ENCODE measurements at regions of chr22 and their contacts with region 1.

Region 1: GRCh38 chr22:30423982-30424963 is 1.3 kb upstream of the MTFP1 start:
- DNase-seq: peak; percentile 100
- H3K4me3 ChIP-seq: peak overlapping the region; percentile 93
- H3K27ac ChIP-seq: peak overlapping the region; percentile 75
- H3K4me1 ChIP-seq: peaks cover 35% of the 10 kb centered on the region
- CTCF ChIP-seq: 0 out of 2 replicates have a peak, but pooled peaks have one; percentile 38

Region 2: DNA sequence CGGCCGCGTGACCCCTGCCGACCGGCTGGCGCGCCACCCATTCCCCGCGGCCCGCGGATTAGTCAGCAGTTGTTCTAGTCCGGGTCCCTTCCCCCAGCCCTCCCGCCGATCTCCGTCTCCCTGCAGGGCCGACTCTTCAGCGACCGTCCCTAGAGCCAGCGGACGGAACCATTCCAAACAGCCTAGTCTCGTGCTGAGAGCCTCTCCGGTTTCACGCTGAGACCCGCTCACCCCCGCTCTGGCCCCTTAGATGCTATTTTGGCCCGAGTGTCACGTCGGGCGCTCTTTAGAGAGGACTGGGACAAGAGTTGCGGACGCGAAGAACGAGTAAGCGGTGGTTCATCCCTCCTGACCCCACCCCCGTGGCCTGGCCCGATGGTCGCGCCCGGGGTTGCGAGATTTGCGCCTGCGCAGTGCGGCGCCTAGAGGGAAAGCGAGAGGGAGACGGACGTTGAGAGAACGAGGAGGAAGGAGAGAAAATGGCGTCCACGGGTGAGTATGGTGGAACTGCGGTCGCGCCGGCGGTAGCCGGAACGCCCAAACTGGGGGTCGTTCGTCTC is 1156.3 kb before region 1 on chr22 and contains the starts of genes EWSR1 and RHBDD3:
- CTCF ChIA-PET with region 1: no interaction called
- POLR2A ChIA-PET with region 1: no interaction called
- intact Hi-C with region 1: loop called (anchors 10 kb)
- DNase-seq: peak; percentile 97
- H3K4me3 ChIP-seq: peak within 1 kb of the TSS; percentile 92
- H3K27ac ChIP-seq: peak within 1 kb of the TSS; percentile 75
- H3K4me1 ChIP-seq: peaks cover 34% of the 10 kb centered on the region
- CTCF ChIP-seq: no peak
- total RNA-seq, gene EWSR1: 270 and 311 TPM in 2 replicates
- total RNA-seq, gene RHBDD3: 37.9 and 44.5 TPM in 2 replicates

Region 3: DNA sequence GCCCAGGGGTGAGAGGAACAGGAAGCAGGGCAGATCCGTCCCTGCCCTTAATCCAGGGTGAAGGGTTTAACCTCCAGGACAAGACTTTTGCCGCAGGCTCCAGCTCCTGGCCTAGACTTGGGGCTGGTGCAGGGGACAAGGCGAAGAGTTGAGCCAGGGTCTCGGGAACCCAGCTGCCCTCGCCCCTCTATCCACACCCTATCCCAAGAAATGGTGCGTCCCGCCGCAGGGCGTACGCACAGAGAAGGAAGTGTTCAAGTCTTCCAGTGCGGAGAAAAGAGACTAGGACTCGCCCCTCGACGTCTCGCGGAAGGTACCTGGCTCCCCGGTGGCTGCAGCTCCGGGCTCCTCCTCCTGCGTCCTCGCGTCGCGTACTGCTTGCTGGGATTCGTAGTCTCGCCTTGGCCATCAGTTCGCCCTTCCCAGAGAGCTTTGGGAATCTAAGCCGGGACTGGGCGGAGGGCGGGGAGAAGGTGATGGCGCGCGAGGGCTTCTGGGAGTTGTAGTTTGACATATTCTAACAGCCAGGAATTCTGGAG is 657.6 kb before region 1 on chr22 and contains the start of gene ZMAT5:
- CTCF ChIA-PET with region 1: no interaction called
- POLR2A ChIA-PET with region 1: no interaction called
- intact Hi-C with region 1: loop called (anchors 5 kb)
- DNase-seq: peak; percentile 98
- H3K4me3 ChIP-seq: peak within 1 kb of the TSS; percentile 89
- H3K27ac ChIP-seq: peak within 1 kb of the TSS; percentile 52
- H3K4me1 ChIP-seq: peaks cover 22% of the 10 kb centered on the region
- CTCF ChIP-seq: no peak
- total RNA-seq, gene ZMAT5: 19.1 and 22.1 TPM in 2 replicates

Region 4: GRCh38 chr22:30386960-30387827 is 37.1 kb before region 1 on chr22 and contains the start of gene RNF215:
- CTCF ChIA-PET with region 1: interaction called, 5 read pairs
- POLR2A ChIA-PET with region 1: interaction called, 15 read pairs
- intact Hi-C with region 1: loop called (anchors 1 kb)
- DNase-seq: peak; percentile 86
- H3K4me3 ChIP-seq: peak within 1 kb of the TSS; percentile 66
- H3K27ac ChIP-seq: no peak within 1 kb of the TSS
- H3K4me1 ChIP-seq: peaks cover 23% of the 10 kb centered on the region
- CTCF ChIP-seq: peak; percentile 82
- total RNA-seq, gene RNF215: 6.9 and 8.0 TPM in 2 replicates

Region 5: DNA sequence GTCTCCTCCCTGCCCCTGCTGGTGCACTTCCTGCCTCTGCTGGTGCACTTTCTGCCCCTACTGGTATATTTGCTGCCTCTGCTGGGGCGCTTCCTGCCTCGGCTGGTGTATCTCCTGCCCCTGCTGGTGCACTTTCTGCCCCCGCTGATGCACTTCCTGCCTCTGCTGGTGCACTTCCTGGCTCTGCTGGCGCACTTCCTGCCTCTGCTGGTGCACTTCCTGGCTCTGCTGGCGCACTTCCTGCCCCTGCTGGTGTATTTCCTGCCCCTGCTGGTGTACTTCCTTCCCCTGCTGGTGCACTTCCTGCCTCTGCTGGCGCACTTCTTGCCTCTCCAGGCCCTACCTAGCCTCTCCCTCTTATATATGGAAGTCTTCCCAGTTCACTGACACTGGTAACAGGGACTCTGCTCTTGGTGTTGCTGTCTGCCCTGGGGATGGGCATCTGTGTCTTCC is 11.4 kb after region 1 on chr22:
- CTCF ChIA-PET with region 1: interaction called, 6 read pairs
- POLR2A ChIA-PET with region 1: interaction called, 48 read pairs
- intact Hi-C with region 1: loop called (anchors 1 kb)
- DNase-seq: peak; percentile 90
- H3K4me3 ChIP-seq: peak overlapping the region; percentile 63
- H3K27ac ChIP-seq: peak overlapping the region; percentile 67
- H3K4me1 ChIP-seq: peaks cover 25% of the 10 kb centered on the region
- CTCF ChIP-seq: peak; percentile 67

Region 6: DNA sequence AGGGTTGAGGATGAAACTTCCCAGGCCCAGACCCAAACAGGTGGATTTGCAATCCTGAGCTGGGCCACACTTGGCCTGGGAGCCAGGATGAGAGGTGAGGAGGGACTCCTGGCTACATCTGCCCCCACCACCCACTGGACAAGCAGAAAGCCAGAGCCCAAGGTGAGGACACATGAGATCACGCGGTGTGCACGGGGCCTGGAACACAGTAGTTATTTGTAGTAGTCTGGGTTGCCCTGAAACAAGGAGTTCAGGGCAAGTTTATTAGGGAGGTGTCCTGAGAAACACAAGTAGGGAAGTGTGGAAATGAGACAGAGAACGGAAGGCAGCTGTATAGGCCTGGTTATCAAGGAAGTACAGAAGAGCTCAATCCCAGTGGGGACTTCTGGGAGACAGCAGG is 122.9 kb after region 1 on chr22:
- CTCF ChIA-PET with region 1: no interaction called
- POLR2A ChIA-PET with region 1: no interaction called
- intact Hi-C with region 1: no loop called
- DNase-seq: no peak
- H3K4me3 ChIP-seq: no peak overlapping the region
- H3K27ac ChIP-seq: no peak overlapping the region
- H3K4me1 ChIP-seq: no peaks in the 10 kb centered on the region
- CTCF ChIP-seq: no peak

Region 7: GRCh38 chr22:30562366-30562765 is 138.1 kb after region 1 on chr22:
- CTCF ChIA-PET with region 1: no interaction called
- POLR2A ChIA-PET with region 1: no interaction called
- intact Hi-C with region 1: no loop called
- DNase-seq: no peak
- H3K4me3 ChIP-seq: no peak overlapping the region
- H3K27ac ChIP-seq: no peak overlapping the region
- H3K4me1 ChIP-seq: no peaks in the 10 kb centered on the region
- CTCF ChIP-seq: no peak

Region 8: DNA sequence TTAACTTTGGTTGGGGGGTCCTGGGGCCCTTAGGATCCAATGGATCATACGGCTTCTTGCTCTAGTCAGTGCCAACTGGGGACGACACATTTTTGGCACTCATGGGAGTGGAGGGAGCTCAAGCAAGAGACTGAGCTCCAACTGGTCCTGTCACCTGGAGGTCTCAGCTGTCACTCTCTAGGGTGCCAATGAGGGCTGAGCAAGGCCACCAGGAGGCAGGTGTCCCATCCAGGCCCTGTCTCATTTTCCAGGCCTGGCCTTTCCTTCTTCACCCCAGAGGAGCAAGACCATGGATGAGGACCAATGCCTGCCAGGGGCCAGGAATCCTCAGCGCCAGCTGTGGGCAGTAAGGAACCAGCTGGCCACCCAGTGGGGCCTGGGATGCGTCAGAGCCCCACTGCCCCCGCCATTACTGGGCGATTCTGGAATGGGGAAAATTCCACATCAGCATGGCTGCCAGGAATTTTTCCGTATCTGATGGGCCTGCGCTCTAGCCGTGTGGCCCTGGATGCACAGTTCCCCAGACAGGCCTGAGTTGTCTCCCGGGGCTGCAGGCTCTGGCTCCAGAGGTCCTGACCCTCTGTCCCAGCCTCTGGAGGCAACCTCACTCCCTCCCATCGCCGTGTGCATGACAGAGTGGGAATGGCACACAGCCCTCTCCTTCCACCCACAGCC is 150.9 kb after region 1 on chr22:
- CTCF ChIA-PET with region 1: no interaction called
- POLR2A ChIA-PET with region 1: no interaction called
- intact Hi-C with region 1: no loop called
- DNase-seq: no peak
- H3K4me3 ChIP-seq: no peak overlapping the region
- H3K27ac ChIP-seq: no peak overlapping the region
- H3K4me1 ChIP-seq: no peaks in the 10 kb centered on the region
- CTCF ChIP-seq: no peak

Region 9: DNA sequence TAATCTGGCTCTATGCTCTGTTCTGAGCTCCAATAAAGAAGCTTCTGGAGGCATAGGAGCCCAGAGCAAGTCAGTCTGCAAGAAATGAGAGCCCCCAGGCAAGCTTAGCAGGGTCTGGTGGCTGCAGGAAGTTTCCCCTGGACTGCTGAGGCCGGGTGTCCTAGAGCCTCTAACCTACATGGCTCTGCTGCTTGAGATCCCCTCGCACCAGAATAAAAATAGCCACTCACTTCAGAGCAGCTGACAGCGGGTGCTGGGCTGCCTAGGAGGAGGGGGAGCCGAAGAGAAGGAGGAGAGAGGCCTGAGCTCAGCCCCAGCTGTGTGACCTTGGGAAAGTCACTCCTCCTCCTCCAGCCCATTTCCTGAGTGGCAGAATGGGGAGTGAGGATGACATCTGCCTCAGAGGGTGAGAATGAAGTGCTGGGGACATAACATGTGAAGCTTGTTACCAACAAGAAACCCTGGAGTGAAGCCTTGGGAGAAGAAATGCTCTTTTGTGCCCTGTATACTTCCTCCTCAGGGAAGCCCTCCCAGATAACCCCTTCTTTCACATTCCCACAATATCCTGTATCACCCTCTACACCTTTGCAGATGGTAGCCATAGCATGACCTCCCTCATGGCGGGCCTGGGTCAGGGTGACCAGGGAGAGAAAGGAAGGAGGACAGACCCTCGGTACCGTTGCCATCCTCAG is 694.9 kb after region 1 on chr22:
- CTCF ChIA-PET with region 1: no interaction called
- POLR2A ChIA-PET with region 1: no interaction called
- intact Hi-C with region 1: no loop called
- DNase-seq: no peak
- H3K4me3 ChIP-seq: no peak overlapping the region
- H3K27ac ChIP-seq: no peak overlapping the region
- H3K4me1 ChIP-seq: no peaks in the 10 kb centered on the region
- CTCF ChIP-seq: no peak